CD4-positive, alpha-beta T cell (primary cell): ENCODE measurements at regions of chr15 and their contacts with region 1.

Region 1: DNA sequence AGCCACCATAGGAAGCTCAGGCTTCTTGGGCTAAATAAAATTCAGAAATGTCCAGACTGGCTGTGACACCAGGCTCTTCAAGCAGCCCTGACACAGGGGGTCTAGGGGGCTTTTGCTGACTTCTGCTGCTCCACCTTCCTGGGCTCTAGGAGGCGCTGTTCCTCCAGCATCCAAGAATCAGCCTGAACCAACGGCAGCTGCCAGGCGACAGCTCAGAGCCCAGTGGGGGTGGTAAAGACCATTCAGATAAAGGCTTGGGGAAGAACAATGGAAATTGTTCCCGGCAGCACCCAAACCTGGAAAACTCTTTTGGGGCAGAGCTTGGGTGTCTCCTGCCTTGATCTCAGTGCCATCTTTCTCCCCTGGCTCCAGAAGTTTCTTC is 21.6 kb upstream of the PSTPIP1 start:
- DNase-seq: peak; percentile 50 to 83 (median 60)
- ATAC-seq: peak; percentile 81
- H3K4me3 ChIP-seq: no peak overlapping the region
- H3K4me3 Mint-ChIP-seq: no peak overlapping the region
- H3K27ac ChIP-seq: no peak overlapping the region
- H3K27ac Mint-ChIP-seq: no peak overlapping the region
- H3K4me1 ChIP-seq: peaks cover 17% of the 10 kb centered on the region
- H3K4me1 Mint-ChIP-seq: no peaks in the 10 kb centered on the region
- H3K27me3 ChIP-seq: no peaks in the 10 kb centered on the region
- H3K27me3 Mint-ChIP-seq: no peaks in the 10 kb centered on the region
- CTCF ChIP-seq: peak; percentile 76

Region 2: GRCh38 chr15:76460871-76461270 is 512.5 kb before region 1 on chr15:
- CTCF ChIA-PET with region 1: no interaction called
- POLR2A ChIA-PET with region 1: no interaction called
- intact Hi-C with region 1: no loop called
- DNase-seq: no peak
- ATAC-seq: no peak
- H3K4me3 ChIP-seq: no peak overlapping the region
- H3K4me3 Mint-ChIP-seq: no peak overlapping the region
- H3K27ac ChIP-seq: no peak overlapping the region
- H3K27ac Mint-ChIP-seq: no peak overlapping the region
- H3K4me1 ChIP-seq: no peaks in the 10 kb centered on the region
- H3K4me1 Mint-ChIP-seq: no peaks in the 10 kb centered on the region
- H3K27me3 ChIP-seq: no peaks in the 10 kb centered on the region
- H3K27me3 Mint-ChIP-seq: no peaks in the 10 kb centered on the region
- CTCF ChIP-seq: no peak

Region 3: GRCh38 chr15:76787273-76787672 is 186.1 kb before region 1 on chr15:
- CTCF ChIA-PET with region 1: no interaction called
- POLR2A ChIA-PET with region 1: no interaction called
- intact Hi-C with region 1: no loop called
- DNase-seq: no peak
- ATAC-seq: no peak
- H3K4me3 ChIP-seq: no peak overlapping the region
- H3K4me3 Mint-ChIP-seq: no peak overlapping the region
- H3K27ac ChIP-seq: no peak overlapping the region
- H3K27ac Mint-ChIP-seq: no peak overlapping the region
- H3K4me1 ChIP-seq: no peaks in the 10 kb centered on the region
- H3K4me1 Mint-ChIP-seq: no peaks in the 10 kb centered on the region
- H3K27me3 ChIP-seq: no peaks in the 10 kb centered on the region
- H3K27me3 Mint-ChIP-seq: no peaks in the 10 kb centered on the region
- CTCF ChIP-seq: no peak

Region 4: DNA sequence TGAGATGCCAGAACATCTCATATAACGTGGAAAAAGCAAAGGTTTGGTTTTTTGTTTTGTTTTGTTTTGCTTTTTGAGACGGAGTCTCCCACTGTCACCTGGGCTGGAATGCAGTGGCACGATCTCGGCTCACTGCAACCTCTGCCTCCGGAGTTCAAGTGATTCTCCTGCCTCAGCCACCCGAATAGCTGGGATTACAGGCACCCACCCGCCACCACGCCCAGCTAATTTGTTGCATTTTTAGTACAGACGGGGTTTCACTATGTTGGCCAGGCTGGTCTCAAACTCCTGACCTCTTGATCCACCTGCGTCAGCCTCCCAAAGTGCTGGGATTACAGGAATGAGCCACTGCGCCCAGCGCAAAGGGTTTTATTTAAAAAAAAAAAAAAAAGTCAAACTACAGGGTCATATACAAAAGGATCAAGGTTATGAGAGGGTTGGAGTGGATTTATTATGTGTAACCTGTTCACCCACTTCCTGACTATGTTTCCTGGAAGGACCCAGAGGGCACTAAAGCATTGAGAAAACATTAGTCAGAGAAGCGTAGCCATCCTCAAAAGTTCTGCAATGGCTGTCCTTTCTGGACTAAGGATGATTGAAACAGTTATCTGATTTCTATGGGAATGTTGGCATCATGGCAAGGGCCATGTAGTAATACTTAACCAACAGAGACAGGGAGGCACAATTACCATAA is 61.1 kb before region 1 on chr15:
- CTCF ChIA-PET with region 1: no interaction called
- POLR2A ChIA-PET with region 1: no interaction called
- intact Hi-C with region 1: no loop called
- DNase-seq: no peak
- ATAC-seq: no peak
- H3K4me3 ChIP-seq: no peak overlapping the region
- H3K4me3 Mint-ChIP-seq: no peak overlapping the region
- H3K27ac ChIP-seq: no peak overlapping the region
- H3K27ac Mint-ChIP-seq: no peak overlapping the region
- H3K4me1 ChIP-seq: no peaks in the 10 kb centered on the region
- H3K4me1 Mint-ChIP-seq: no peaks in the 10 kb centered on the region
- H3K27me3 ChIP-seq: peaks cover 0 to 2% of the 10 kb centered on the region in 2 experiments
- H3K27me3 Mint-ChIP-seq: peaks cover 12% of the 10 kb centered on the region
- CTCF ChIP-seq: no peak

Region 5: GRCh38 chr15:76935620-76936019 is 37.7 kb before region 1 on chr15:
- CTCF ChIA-PET with region 1: no interaction called
- POLR2A ChIA-PET with region 1: no interaction called
- intact Hi-C with region 1: no loop called
- DNase-seq: no peak
- ATAC-seq: no peak
- H3K4me3 ChIP-seq: no peak overlapping the region
- H3K4me3 Mint-ChIP-seq: no peak overlapping the region
- H3K27ac ChIP-seq: no peak overlapping the region
- H3K27ac Mint-ChIP-seq: no peak overlapping the region
- H3K4me1 ChIP-seq: peaks cover 6% of the 10 kb centered on the region
- H3K4me1 Mint-ChIP-seq: peaks cover 38% of the 10 kb centered on the region
- H3K27me3 ChIP-seq: no peaks in the 10 kb centered on the region
- H3K27me3 Mint-ChIP-seq: no peaks in the 10 kb centered on the region
- CTCF ChIP-seq: no peak

Region 6: GRCh38 chr15:77013776-77014131 is 40.4 kb after region 1 on chr15:
- CTCF ChIA-PET with region 1: interaction called, 7 read pairs
- POLR2A ChIA-PET with region 1: no interaction called
- intact Hi-C with region 1: loop called in 1 of 2 experiments (anchors 5 kb)
- DNase-seq: peak; percentile 52 to 92 (median 82)
- ATAC-seq: peak; percentile 85
- H3K4me3 ChIP-seq: peak overlapping the region; percentile 21
- H3K4me3 Mint-ChIP-seq: peak overlapping the region; percentile 88
- H3K27ac ChIP-seq: peak overlapping the region; percentile 50 to 76
- H3K27ac Mint-ChIP-seq: peak overlapping the region; percentile 98
- H3K4me1 ChIP-seq: peaks cover 99% of the 10 kb centered on the region
- H3K4me1 Mint-ChIP-seq: peaks cover 85% of the 10 kb centered on the region
- H3K27me3 ChIP-seq: no peaks in the 10 kb centered on the region
- H3K27me3 Mint-ChIP-seq: no peaks in the 10 kb centered on the region
- CTCF ChIP-seq: no peak

Region 7: DNA sequence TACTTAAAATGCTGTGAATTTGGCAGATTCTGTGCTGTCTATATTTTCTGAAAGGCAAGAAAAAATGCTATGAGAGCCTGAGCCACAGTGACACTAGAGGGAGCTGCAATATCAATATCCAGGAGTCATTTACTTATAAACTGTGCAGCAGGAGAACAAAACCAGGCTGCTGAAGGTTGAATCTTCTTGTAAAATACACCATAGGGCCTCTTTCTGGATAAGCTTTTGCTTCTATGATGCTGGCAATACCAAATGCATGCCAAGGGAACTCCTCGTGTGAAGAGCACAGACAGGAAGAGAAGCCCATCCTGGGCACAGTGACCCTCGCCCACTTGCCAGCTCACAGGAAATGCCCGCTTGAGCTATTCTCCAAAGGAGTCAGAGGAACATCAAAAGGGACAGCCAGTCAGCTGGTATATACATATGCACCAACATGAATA is 145.5 kb after region 1 on chr15:
- CTCF ChIA-PET with region 1: no interaction called
- POLR2A ChIA-PET with region 1: no interaction called
- intact Hi-C with region 1: loop called in 1 of 2 experiments (anchors 10 kb)
- DNase-seq: peak in 7 of 14 experiments; percentile 9 to 73 (median 47)
- ATAC-seq: peak; percentile 59
- H3K4me3 ChIP-seq: no peak overlapping the region
- H3K4me3 Mint-ChIP-seq: no peak overlapping the region
- H3K27ac ChIP-seq: no peak overlapping the region
- H3K27ac Mint-ChIP-seq: no peak overlapping the region
- H3K4me1 ChIP-seq: peaks cover 4% of the 10 kb centered on the region
- H3K4me1 Mint-ChIP-seq: no peaks in the 10 kb centered on the region
- H3K27me3 ChIP-seq: no peaks in the 10 kb centered on the region
- H3K27me3 Mint-ChIP-seq: no peaks in the 10 kb centered on the region
- CTCF ChIP-seq: peak; percentile 65